ENCODE measurements at regions of chr4 and their contacts with region 1.

Region 1: GRCh38 chr4:24584175-24584850 is at the start of gene DHX15:
- DNase-seq: peak; percentile 83 to 99 (median 90)
- ATAC-seq: peak; percentile 93
- H3K4me3 ChIP-seq: peak within 1 kb of the TSS; percentile 95
- H3K4me3 Mint-ChIP-seq: peak within 1 kb of the TSS; percentile 96
- H3K27ac ChIP-seq: peak within 1 kb of the TSS; percentile 94 to 96
- H3K27ac Mint-ChIP-seq: peak within 1 kb of the TSS; percentile 86
- H3K4me1 ChIP-seq: peaks cover 28% of the 10 kb centered on the region
- H3K4me1 Mint-ChIP-seq: peaks cover 41% of the 10 kb centered on the region
- H3K27me3 ChIP-seq: no peaks in the 10 kb centered on the region
- H3K27me3 Mint-ChIP-seq: peaks cover 5% of the 10 kb centered on the region
- CTCF ChIP-seq: no peak
- total RNA-seq, gene DHX15: 208 to 209 TPM

Region 2: DNA sequence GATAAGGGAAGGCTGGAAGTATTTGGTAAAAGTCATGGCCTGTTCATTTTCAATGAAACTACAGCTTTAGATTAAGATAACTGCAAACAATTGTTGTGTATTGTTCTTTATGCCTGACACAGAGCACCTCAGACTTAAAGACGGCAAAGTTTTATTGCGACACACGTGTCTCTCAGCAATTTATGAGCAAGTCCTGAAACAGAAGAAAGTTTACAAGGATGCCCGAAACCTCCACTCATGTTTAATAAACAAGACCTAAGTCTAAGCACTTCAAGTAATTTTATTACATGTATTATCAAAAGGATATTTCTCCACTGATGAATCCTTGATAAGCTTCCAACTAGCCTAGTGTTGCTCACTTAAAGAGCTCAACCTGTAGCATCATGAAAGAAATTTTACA is 50.9 kb before region 1 on chr4:
- CTCF ChIA-PET with region 1: no interaction called
- POLR2A ChIA-PET with region 1: interaction called, 3 read pairs
- intact Hi-C with region 1: loop called in 1 of 2 experiments (anchors 5 kb)
- DNase-seq: no peak
- ATAC-seq: no peak
- H3K4me3 ChIP-seq: no peak overlapping the region
- H3K4me3 Mint-ChIP-seq: no peak overlapping the region
- H3K27ac ChIP-seq: no peak overlapping the region
- H3K27ac Mint-ChIP-seq: no peak overlapping the region
- H3K4me1 ChIP-seq: no peaks in the 10 kb centered on the region
- H3K4me1 Mint-ChIP-seq: peaks cover 12% of the 10 kb centered on the region
- H3K27me3 ChIP-seq: no peaks in the 10 kb centered on the region
- H3K27me3 Mint-ChIP-seq: no peaks in the 10 kb centered on the region
- CTCF ChIP-seq: no peak

Region 3: GRCh38 chr4:24570574-24571236 is 13.6 kb before region 1 on chr4:
- CTCF ChIA-PET with region 1: interaction called, 5 read pairs
- POLR2A ChIA-PET with region 1: interaction called, 24 read pairs
- intact Hi-C with region 1: no loop called
- DNase-seq: no peak
- ATAC-seq: no peak
- H3K4me3 ChIP-seq: no peak overlapping the region
- H3K4me3 Mint-ChIP-seq: peak overlapping the region; percentile 17
- H3K27ac ChIP-seq: no peak overlapping the region
- H3K27ac Mint-ChIP-seq: peak overlapping the region; percentile 60
- H3K4me1 ChIP-seq: peaks cover 23% of the 10 kb centered on the region
- H3K4me1 Mint-ChIP-seq: peaks cover 89% of the 10 kb centered on the region
- H3K27me3 ChIP-seq: no peaks in the 10 kb centered on the region
- H3K27me3 Mint-ChIP-seq: no peaks in the 10 kb centered on the region
- CTCF ChIP-seq: no peak

Region 4: DNA sequence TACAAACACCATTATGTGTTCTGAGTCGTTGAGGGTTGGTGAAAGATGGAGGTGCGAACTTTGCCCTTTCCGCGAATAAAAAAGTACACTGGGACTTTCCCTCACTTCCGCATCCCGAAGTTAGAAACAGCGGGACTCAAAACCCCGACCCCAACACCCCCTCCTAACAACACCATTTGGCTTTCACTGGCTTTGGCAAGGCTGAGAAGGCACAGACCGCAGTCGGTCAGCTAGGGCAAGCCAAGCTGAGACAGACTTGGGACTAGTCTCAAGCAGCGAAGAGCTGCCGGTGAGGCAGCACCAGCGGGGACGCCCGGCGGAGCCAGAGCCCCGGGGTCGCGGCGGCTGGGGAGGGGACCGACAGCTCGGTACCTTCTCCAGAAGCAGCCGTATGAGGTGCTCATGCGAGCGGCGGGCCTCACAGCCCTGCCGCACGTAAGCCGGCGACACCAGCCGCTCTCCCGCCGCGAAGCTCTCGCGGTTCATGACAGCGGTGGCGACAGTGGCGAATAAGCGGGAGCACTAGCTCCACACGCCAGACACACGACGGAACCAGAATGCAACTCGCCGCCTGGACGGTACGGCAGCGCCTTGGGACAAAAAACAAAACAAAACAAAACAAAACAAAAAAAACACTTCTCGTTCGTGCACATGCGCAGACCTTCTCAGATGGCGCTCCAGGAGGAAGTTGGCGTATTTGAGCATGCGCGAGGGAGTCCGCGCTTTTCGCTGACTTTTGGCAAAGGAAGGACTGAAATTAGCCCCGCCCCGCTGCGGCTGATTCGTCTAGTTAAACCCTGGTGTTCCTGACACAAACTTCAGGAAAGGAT is 575.8 kb after region 1 on chr4 and contains the start of gene SEPSECS:
- CTCF ChIA-PET with region 1: no interaction called
- POLR2A ChIA-PET with region 1: interaction called, 8 read pairs
- intact Hi-C with region 1: loop called in 1 of 2 experiments (anchors 2 kb)
- DNase-seq: peak; percentile 84 to 98 (median 92)
- ATAC-seq: peak; percentile 82
- H3K4me3 ChIP-seq: peak within 1 kb of the TSS; percentile 91
- H3K4me3 Mint-ChIP-seq: peak within 1 kb of the TSS; percentile 93
- H3K27ac ChIP-seq: peak within 1 kb of the TSS; percentile 97 to 98
- H3K27ac Mint-ChIP-seq: peak within 1 kb of the TSS; percentile 96
- H3K4me1 ChIP-seq: peaks cover 26% of the 10 kb centered on the region
- H3K4me1 Mint-ChIP-seq: peaks cover 68% of the 10 kb centered on the region
- H3K27me3 ChIP-seq: no peaks in the 10 kb centered on the region
- H3K27me3 Mint-ChIP-seq: no peaks in the 10 kb centered on the region
- CTCF ChIP-seq: no peak
- total RNA-seq, gene SEPSECS: 18.5 to 18.7 TPM